ENCODE measurements at regions of chr7 and their contacts with region 1.

Region 1: DNA sequence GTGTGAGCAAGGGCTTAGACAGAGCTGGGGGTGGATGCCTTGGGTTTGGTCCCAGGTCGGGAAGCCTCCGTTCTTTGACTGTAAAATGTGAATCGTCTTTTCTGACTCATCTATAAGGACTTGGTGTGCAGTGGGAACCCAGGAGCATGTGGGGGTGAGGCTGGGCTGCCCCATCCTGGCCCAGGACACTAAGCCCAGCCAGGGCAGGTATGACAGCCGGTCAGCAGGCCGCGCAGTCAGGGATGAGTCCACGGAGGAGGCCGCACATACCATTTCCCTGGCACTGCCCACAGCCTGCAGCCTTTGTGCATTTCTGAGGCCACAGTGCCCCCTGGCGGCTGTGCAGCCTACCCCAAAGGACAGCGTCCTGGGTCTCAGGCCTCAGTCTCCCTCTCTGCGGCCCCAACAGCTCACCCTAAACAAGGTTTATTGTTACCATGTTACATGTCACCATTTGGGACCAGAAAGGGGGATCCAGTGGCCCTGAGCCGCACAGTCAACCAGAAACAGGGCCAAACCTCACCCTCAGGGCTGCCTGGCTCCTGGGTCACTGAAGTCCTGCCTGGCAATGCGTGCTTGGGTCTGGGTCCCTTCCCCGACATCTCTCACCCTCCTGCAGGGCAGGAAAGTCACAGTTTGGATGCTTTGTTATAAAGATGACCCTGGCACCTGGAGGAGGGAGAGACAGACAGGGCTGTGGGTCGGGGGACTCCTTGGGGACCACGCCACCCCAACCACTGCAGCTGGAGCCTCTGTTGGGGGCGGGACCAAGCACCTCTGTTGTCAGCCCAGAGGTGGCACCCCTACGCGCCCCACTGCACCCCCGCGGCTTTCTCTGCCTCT is 14.4 kb upstream of the SH2B2 start:
- DNase-seq: peak; percentile 83 to 94 (median 92)
- ATAC-seq: peak; percentile 87 to 88
- H3K4me3 ChIP-seq: no peak overlapping the region
- H3K27ac ChIP-seq: no peak overlapping the region
- H3K4me1 ChIP-seq: no peaks in the 10 kb centered on the region
- H3K27me3 ChIP-seq: no peaks in the 10 kb centered on the region

Region 2: DNA sequence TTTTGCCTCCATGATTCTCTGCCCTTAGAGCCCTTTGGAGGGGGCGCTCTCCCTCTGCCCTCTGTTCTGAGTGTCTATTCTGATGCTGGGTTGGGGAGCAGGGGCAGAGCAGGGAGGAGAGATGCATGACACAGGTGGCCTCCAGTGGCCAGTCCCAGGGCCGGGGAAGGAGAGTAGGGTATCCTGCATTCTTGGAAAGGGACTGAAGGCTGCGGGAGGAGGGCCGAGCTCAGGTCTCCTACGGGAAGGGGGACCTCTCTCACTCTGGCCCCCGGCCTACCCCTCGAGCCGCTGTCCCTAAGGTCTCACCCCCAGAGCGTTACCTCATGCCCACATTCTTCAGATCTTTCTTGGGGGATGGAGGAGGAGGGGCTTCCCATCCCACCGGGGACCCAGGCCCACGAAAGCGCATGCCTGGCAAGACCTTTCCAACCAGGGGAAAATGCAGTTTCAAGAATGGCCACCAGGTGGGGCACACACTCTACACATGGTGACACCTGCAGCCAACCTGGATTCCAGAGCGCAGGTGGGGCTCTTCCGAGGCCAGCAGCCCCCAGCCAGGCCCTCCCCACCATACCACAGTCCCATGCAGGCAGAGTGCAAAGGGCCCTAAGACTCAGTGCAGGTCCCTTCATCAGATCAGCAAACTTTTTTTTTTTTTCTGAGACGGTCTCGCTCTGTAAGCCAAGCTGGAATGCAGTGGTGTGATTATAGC is 729.6 kb before region 1 on chr7:
- intact Hi-C with region 1: loop called (anchors 2 to 5 kb)
- DNase-seq: peak; percentile 63 to 85 (median 76)
- ATAC-seq: peak; percentile 22 to 44
- H3K4me3 ChIP-seq: no peak overlapping the region
- H3K27ac ChIP-seq: no peak overlapping the region
- H3K4me1 ChIP-seq: no peaks in the 10 kb centered on the region
- H3K27me3 ChIP-seq: no peaks in the 10 kb centered on the region

Region 3: DNA sequence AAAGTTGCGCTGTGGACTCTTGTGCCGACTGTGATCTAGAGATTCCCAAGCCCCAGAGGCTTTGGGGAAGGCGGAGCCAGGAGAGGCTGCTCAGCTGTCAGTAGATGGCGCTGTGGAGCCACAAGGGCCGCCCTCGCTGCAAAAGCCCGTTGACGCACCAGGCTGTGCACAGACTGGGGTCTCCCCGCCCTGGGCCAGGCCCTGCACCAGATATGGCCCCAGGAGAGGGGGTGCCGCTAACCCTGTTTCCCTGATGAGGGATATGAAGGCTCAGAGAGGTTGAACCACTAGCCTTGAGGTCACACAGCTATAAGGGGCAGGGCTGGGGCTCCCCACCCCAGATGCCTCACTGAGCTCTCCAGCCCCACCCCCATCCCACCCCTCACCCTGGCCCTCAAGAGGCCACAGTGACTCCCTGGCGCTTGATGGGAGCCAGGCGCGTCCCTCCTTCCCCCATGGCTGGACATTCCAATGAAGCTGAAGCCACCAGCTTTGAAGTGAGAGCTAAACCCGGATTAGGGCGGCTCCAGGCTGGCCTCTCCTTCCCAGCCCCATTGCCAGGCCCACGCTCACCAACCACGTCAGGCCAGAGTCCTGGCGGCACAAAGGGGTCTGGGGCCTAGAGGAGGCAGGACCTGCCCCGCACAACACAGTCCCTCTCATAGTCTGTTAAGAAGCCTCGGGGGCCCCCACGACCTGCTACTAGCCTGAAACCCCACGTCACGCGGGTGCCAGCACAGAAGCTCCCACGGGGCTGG is 669.6 kb before region 1 on chr7:
- intact Hi-C with region 1: loop called in 1 of 4 experiments (anchors 5 kb)
- DNase-seq: peak; percentile 80 to 90 (median 89)
- ATAC-seq: peak; percentile 87 to 90
- H3K4me3 ChIP-seq: no peak overlapping the region
- H3K27ac ChIP-seq: no peak overlapping the region
- H3K4me1 ChIP-seq: no peaks in the 10 kb centered on the region
- H3K27me3 ChIP-seq: no peaks in the 10 kb centered on the region